PC-9 (cell line): ENCODE measurements at regions of chr15 and their contacts with region 1.

Region 1: GRCh38 chr15:50798684-50799083 is 33.2 kb upstream of the SPPL2A start:
- DNase-seq: peak; percentile 27 to 69
- H3K4me3 ChIP-seq: no peak overlapping the region
- H3K27ac ChIP-seq: no peak overlapping the region
- H3K4me1 ChIP-seq: peaks cover 22% of the 10 kb centered on the region
- H3K27me3 ChIP-seq: no peaks in the 10 kb centered on the region
- CTCF ChIP-seq: no peak

Region 2: GRCh38 chr15:50718700-50719125 is 80.0 kb before region 1 on chr15:
- CTCF ChIA-PET with region 1: interaction called, 11 read pairs
- POLR2A ChIA-PET with region 1: no interaction called
- intact Hi-C with region 1: no loop called
- DNase-seq: no peak
- H3K4me3 ChIP-seq: no peak overlapping the region
- H3K27ac ChIP-seq: no peak overlapping the region
- H3K4me1 ChIP-seq: no peaks in the 10 kb centered on the region
- H3K27me3 ChIP-seq: no peaks in the 10 kb centered on the region
- CTCF ChIP-seq: no peak

Region 3: DNA sequence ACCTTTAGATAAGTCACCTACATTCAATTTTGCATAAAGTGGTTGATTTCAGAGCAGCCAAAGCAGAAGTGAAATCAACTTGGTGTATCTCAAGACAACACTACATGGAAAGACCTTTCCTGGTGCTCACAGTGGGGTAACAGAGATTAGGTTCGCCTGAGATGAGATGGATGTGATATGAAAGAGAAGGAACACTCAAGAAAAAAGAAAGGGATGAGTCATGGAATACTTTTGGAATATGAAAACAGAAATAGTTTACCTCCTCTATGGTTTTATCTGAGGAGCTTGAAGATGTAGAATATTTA is 56.4 kb after region 1 on chr15:
- CTCF ChIA-PET with region 1: no interaction called
- POLR2A ChIA-PET with region 1: interaction called, 10 read pairs
- intact Hi-C with region 1: no loop called
- DNase-seq: peak in 1 of 2 experiments; percentile 35
- H3K4me3 ChIP-seq: no peak overlapping the region
- H3K27ac ChIP-seq: peak overlapping the region; percentile 50
- H3K4me1 ChIP-seq: peaks cover 36% of the 10 kb centered on the region
- H3K27me3 ChIP-seq: no peaks in the 10 kb centered on the region
- CTCF ChIP-seq: no peak